ENCODE measurements at regions of chr2 and their contacts with region 1.

Region 1: DNA sequence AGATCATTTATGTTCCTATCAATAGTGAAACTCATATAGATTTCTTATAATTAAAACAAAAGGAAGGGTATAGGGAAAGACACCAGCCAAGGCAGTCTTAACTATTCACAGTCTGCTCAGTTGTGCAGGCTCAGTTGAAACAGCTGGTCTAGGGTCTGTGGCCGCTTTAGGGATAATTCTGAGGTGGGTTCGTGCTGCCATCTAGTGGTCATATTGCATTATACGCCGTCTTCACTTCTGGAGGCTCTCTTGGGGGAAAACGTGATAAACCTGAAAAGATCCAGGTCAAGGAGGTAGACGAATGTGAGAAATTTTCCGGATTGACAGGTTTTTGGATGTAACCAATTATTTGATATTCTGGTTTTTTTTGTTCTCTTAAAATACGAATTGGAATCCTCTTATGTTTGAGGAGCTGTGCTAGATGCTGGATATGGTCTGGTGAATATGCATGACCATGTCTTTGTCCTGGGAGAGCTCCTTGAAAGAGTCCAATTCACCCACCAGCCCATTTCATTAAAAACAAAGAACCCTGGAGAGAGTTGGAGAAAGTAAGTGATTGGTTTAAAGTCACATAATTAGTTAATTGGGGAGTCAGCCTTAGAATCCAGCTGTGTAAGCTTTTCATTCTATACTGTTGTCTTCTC is 492.4 kb downstream of the PLCL1 start:
- DNase-seq: peak; percentile 10 to 72 (median 60)
- ATAC-seq: peak; percentile 79
- H3K4me3 ChIP-seq: no peak overlapping the region
- H3K4me3 Mint-ChIP-seq: no peak overlapping the region
- H3K27ac ChIP-seq: no peak overlapping the region
- H3K27ac Mint-ChIP-seq: no peak overlapping the region
- H3K4me1 ChIP-seq: no peaks in the 10 kb centered on the region
- H3K4me1 Mint-ChIP-seq: peaks cover 2% of the 10 kb centered on the region
- H3K27me3 ChIP-seq: no peaks in the 10 kb centered on the region
- H3K27me3 Mint-ChIP-seq: peaks cover 29% of the 10 kb centered on the region
- CTCF ChIP-seq: peak; percentile 84

Region 2: GRCh38 chr2:197786010-197786877 is 510.5 kb before region 1 on chr2:
- CTCF ChIA-PET with region 1: interaction called, 12 read pairs
- POLR2A ChIA-PET with region 1: no interaction called
- intact Hi-C with region 1: no loop called
- DNase-seq: peak in 8 of 9 experiments; percentile 24 to 71 (median 62)
- ATAC-seq: peak; percentile 83
- H3K4me3 ChIP-seq: peak overlapping the region; percentile 56 to 74
- H3K4me3 Mint-ChIP-seq: peak overlapping the region; percentile 78
- H3K27ac ChIP-seq: no peak overlapping the region
- H3K27ac Mint-ChIP-seq: no peak overlapping the region
- H3K4me1 ChIP-seq: no peaks in the 10 kb centered on the region
- H3K4me1 Mint-ChIP-seq: peaks cover 2% of the 10 kb centered on the region
- H3K27me3 ChIP-seq: peaks cover 4 to 6% of the 10 kb centered on the region in 2 experiments
- H3K27me3 Mint-ChIP-seq: peaks cover 17% of the 10 kb centered on the region
- CTCF ChIP-seq: peak; percentile 56

Region 3: DNA sequence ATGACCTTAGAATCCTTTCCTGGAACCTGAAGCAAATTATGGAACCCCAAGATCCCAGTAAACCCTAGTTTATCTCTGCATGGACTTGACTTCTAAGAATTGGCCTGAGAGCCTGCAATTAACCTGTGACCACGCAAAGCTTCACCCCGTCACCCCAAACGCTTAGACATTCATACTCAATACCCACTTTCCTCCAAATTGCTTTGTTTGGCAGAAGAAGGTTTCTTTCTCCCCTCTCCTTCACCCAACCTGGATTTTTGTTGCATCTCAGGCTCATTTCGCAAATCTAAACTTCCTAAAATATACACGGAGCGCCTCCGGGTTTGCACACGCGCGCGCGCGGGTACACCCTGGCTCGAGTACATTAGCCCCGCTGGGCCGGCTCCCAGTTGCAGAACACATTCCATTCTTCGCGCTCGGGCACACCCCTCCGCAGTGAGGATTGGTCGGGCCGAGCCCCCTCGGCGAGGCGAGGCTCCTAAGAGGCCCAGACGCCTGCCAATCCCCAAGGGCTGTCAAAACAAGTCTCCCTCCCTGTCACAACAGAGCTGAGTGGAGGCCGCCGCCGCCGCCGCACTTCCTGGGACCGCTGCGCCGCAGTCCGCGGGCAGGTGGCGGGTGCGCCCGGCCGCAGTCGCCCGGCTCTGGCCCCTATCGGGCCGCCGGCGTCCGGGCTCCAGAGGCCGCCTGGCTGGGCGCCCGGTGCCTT is 492.6 kb before region 1 on chr2 and contains the start of gene PLCL1:
- CTCF ChIA-PET with region 1: interaction called, 29 read pairs
- POLR2A ChIA-PET with region 1: no interaction called
- intact Hi-C with region 1: loop called (anchors 1 kb)
- DNase-seq: peak; percentile 77 to 94 (median 88)
- ATAC-seq: peak; percentile 98
- H3K4me3 ChIP-seq: peak within 1 kb of the TSS; percentile 67 to 70
- H3K4me3 Mint-ChIP-seq: peak within 1 kb of the TSS; percentile 92
- H3K27ac ChIP-seq: peak within 1 kb of the TSS in 1 of 2 experiments; percentile 53
- H3K27ac Mint-ChIP-seq: peak within 1 kb of the TSS; percentile 89
- H3K4me1 ChIP-seq: peaks cover 44% of the 10 kb centered on the region
- H3K4me1 Mint-ChIP-seq: peaks cover 44% of the 10 kb centered on the region
- H3K27me3 ChIP-seq: no peaks in the 10 kb centered on the region
- H3K27me3 Mint-ChIP-seq: no peaks in the 10 kb centered on the region
- CTCF ChIP-seq: no peak
- total RNA-seq, gene PLCL1: 8.2 to 8.3 TPM

Region 4: GRCh38 chr2:198053776-198054698 is 242.8 kb before region 1 on chr2:
- CTCF ChIA-PET with region 1: no interaction called
- POLR2A ChIA-PET with region 1: no interaction called
- intact Hi-C with region 1: loop called in 1 of 2 experiments (anchors 10 kb)
- DNase-seq: peak in 5 of 9 experiments; percentile 34 to 65 (median 50)
- ATAC-seq: no peak
- H3K4me3 ChIP-seq: no peak overlapping the region
- H3K4me3 Mint-ChIP-seq: no peak overlapping the region
- H3K27ac ChIP-seq: no peak overlapping the region
- H3K27ac Mint-ChIP-seq: no peak overlapping the region
- H3K4me1 ChIP-seq: no peaks in the 10 kb centered on the region
- H3K4me1 Mint-ChIP-seq: peaks cover 2% of the 10 kb centered on the region
- H3K27me3 ChIP-seq: no peaks in the 10 kb centered on the region
- H3K27me3 Mint-ChIP-seq: no peaks in the 10 kb centered on the region
- CTCF ChIP-seq: peak; percentile 34

Region 5: DNA sequence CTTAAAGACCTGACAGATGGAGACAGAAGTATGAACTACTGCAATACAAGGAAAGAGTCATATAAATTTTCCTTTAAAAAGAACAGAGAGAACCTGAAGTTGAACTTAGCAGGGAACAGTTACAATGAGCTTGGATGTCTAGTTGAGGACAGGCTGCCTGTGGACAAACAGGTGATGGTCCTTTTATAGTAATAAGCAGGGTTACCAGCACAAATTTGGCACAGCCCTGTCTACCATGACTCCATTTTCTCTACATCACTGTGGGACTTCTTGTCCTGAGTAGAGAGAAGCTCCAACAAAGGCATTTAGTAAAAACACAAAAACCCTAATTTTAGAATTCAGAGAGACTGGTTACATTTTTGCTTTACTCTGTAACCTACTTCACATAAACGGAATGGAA is 44.3 kb before region 1 on chr2:
- CTCF ChIA-PET with region 1: no interaction called
- POLR2A ChIA-PET with region 1: no interaction called
- intact Hi-C with region 1: no loop called
- DNase-seq: no peak
- ATAC-seq: no peak
- H3K4me3 ChIP-seq: no peak overlapping the region
- H3K4me3 Mint-ChIP-seq: no peak overlapping the region
- H3K27ac ChIP-seq: no peak overlapping the region
- H3K27ac Mint-ChIP-seq: no peak overlapping the region
- H3K4me1 ChIP-seq: no peaks in the 10 kb centered on the region
- H3K4me1 Mint-ChIP-seq: no peaks in the 10 kb centered on the region
- H3K27me3 ChIP-seq: no peaks in the 10 kb centered on the region
- H3K27me3 Mint-ChIP-seq: peaks cover 8% of the 10 kb centered on the region
- CTCF ChIP-seq: no peak